Calu3 (cell line): ENCODE measurements at regions of chr4 and their contacts with region 1.

Region 1: GRCh38 chr4:6343950-6344408 is 74.3 kb downstream of the WFS1 start:
- DNase-seq: peak; percentile 68
- H3K4me3 Mint-ChIP-seq: no peak overlapping the region
- H3K27ac Mint-ChIP-seq: no peak overlapping the region
- H3K4me1 Mint-ChIP-seq: no peaks in the 10 kb centered on the region
- H3K27me3 Mint-ChIP-seq: peaks cover 21% of the 10 kb centered on the region
- CTCF ChIP-seq: no peak

Region 2: GRCh38 chr4:6278801-6279197 is 65.2 kb before region 1 on chr4:
- CTCF ChIA-PET with region 1: no interaction called
- intact Hi-C with region 1: no loop called
- DNase-seq: no peak
- H3K4me3 Mint-ChIP-seq: no peak overlapping the region
- H3K27ac Mint-ChIP-seq: no peak overlapping the region
- H3K4me1 Mint-ChIP-seq: no peaks in the 10 kb centered on the region
- H3K27me3 Mint-ChIP-seq: no peaks in the 10 kb centered on the region
- CTCF ChIP-seq: no peak

Region 3: GRCh38 chr4:6427439-6428090 is 83.6 kb after region 1 on chr4:
- CTCF ChIA-PET with region 1: no interaction called
- intact Hi-C with region 1: loop called (anchors 2 kb)
- DNase-seq: no peak
- H3K4me3 Mint-ChIP-seq: no peak overlapping the region
- H3K27ac Mint-ChIP-seq: no peak overlapping the region
- H3K4me1 Mint-ChIP-seq: no peaks in the 10 kb centered on the region
- H3K27me3 Mint-ChIP-seq: peaks cover 5% of the 10 kb centered on the region
- CTCF ChIP-seq: no peak

Region 4: DNA sequence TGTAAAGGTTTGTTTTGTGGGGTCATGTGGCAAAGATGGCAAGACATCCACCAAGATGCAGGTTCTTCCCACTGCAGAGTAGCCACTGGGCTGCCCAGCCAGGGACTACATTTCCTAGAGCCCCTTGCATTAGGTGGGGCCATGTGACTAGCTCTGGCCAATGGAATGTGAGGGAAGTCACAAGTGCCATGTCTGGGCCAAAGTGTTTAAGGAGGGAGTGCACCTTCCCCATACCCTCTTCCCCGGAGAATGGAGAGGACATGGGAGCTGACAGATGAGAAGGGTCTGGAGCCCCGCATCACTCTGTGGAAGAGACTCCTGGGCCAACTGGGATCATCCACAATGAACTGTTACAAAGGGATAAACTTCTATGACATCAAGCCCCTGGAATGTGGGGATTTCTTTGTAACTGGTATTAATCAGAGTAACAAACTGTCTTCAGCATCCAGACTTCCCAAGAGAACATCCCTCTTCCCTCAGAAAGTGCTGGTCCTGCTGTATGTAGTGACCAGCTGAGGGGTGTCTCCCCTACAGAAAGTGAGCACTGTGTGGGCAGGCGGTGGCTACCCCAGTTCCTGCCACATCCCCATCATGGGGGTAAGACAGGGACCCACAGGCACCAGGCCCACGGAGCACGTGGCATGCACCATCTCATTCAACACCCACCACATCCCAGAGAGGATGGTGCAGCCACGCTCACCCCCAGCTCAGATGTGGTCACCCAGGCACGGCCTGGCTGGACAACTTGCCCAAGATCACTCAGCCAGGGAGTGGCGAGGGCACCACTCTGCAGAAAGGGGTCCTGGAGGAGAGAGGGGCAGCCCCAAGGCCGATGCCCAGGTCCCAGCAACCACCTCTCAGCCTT is 117.6 kb after region 1 on chr4:
- CTCF ChIA-PET with region 1: no interaction called
- intact Hi-C with region 1: no loop called
- DNase-seq: no peak
- H3K4me3 Mint-ChIP-seq: no peak overlapping the region
- H3K27ac Mint-ChIP-seq: no peak overlapping the region
- H3K4me1 Mint-ChIP-seq: no peaks in the 10 kb centered on the region
- H3K27me3 Mint-ChIP-seq: no peaks in the 10 kb centered on the region
- CTCF ChIP-seq: no peak